ENCODE measurements at regions of chr1 and their contacts with region 1.

Region 1: GRCh38 chr1:117121776-117122697 is 488 bp upstream of the TRIM45 start:
- DNase-seq: peak; percentile 96 to 97 (median 96)
- ATAC-seq: peak; percentile 98
- H3K4me3 ChIP-seq: peak overlapping the region; percentile 51
- H3K27ac ChIP-seq: peak overlapping the region; percentile 82
- H3K4me1 ChIP-seq: peaks cover 6 to 17% of the 10 kb centered on the region in 2 experiments; a peak in 4 of 5 replicates
- H3K27me3 ChIP-seq: peaks cover 6% of the 10 kb centered on the region in 2 experiments; a peak in 1 of 5 replicates
- CTCF ChIP-seq: peak; percentile 77 to 88 (median 81)
- EP300 ChIP-seq: no peak
- POLR2A ChIP-seq: peak; percentile 79
- RAD21 ChIP-seq: peak; percentile 62 to 70

Region 2: DNA sequence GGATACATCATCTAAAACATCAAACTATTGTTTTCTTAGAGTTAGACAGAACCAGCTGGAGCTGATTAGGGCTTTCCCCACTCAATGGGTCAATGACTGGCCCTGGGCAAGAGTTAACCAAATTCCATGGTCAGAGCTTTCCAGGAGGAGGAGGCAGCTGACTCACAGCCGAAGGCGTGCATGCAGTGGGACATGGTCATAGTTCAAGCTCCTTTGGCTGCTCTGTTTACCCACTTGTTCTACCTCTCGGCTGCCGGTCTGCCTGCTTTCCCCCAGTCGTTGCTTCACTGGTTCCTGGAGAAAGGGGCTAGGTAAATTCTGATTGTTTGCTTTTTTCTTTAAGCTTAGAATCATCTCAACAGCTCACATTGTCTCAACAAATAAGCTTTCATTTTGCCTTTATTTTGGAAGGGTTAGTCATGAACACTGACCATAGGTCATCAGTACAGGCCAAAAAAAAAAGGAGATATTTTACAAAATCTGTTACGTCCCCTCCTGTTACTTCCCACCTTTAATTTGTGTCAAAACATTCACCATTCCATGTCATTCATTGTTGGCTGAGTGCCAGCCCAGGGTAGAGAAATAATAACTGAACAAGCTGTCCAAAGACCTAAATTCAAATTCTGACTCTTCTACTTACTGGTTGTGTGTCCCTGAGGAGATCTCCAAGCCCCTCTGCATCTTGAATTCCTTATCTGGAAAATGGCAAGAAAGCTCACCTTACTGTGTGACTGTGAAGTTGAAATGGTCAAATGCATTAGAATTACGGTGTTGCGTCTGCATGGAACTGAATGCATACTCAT is 998.9 kb before region 1 on chr1:
- CTCF ChIA-PET with region 1: no interaction called
- POLR2A ChIA-PET with region 1: no interaction called
- in situ Hi-C with region 1: no loop called
- intact Hi-C with region 1: no loop called
- DNase-seq: no peak
- ATAC-seq: no peak
- H3K4me3 ChIP-seq: no peak overlapping the region
- H3K27ac ChIP-seq: no peak overlapping the region
- H3K4me1 ChIP-seq: no peaks in the 10 kb centered on the region
- H3K27me3 ChIP-seq: peaks cover 15 to 31% of the 10 kb centered on the region in 2 experiments
- CTCF ChIP-seq: no peak
- EP300 ChIP-seq: no peak
- POLR2A ChIP-seq: no peak
- RAD21 ChIP-seq: no peak

Region 3: GRCh38 chr1:117162816-117163215 is 40.8 kb after region 1 on chr1:
- CTCF ChIA-PET with region 1: no interaction called
- POLR2A ChIA-PET with region 1: no interaction called
- in situ Hi-C with region 1: no loop called
- intact Hi-C with region 1: no loop called
- DNase-seq: no peak
- ATAC-seq: no peak
- H3K4me3 ChIP-seq: no peak overlapping the region
- H3K27ac ChIP-seq: no peak overlapping the region
- H3K4me1 ChIP-seq: no peaks in the 10 kb centered on the region
- H3K27me3 ChIP-seq: peaks cover 3 to 10% of the 10 kb centered on the region in 2 experiments; a peak in 2 of 5 replicates
- CTCF ChIP-seq: no peak
- EP300 ChIP-seq: no peak
- POLR2A ChIP-seq: no peak
- RAD21 ChIP-seq: no peak

Region 4: GRCh38 chr1:117501281-117501680 is 379.2 kb after region 1 on chr1:
- CTCF ChIA-PET with region 1: no interaction called
- POLR2A ChIA-PET with region 1: no interaction called
- in situ Hi-C with region 1: no loop called
- intact Hi-C with region 1: loop called (anchors 10 kb)
- DNase-seq: no peak
- ATAC-seq: no peak
- H3K4me3 ChIP-seq: no peak overlapping the region
- H3K27ac ChIP-seq: no peak overlapping the region
- H3K4me1 ChIP-seq: no peaks in the 10 kb centered on the region
- H3K27me3 ChIP-seq: no peaks in the 10 kb centered on the region
- CTCF ChIP-seq: no peak
- EP300 ChIP-seq: no peak
- POLR2A ChIP-seq: no peak
- RAD21 ChIP-seq: no peak